ENCODE measurements at regions of chr11 and their contacts with region 1.

Region 1: GRCh38 chr11:120523196-120523595 is 11.6 kb downstream of the GRIK4 start:
- DNase-seq: no peak
- H3K4me3 ChIP-seq: no peak overlapping the region
- H3K27ac ChIP-seq: no peak overlapping the region
- H3K4me1 ChIP-seq: peaks cover 0 to 12% (median 2%) of the 10 kb centered on the region in 4 donors
- H3K27me3 ChIP-seq: peaks cover 93% of the 10 kb centered on the region
- CTCF ChIP-seq: no peak
- EP300 ChIP-seq: no peak
- POLR2A ChIP-seq: no peak

Region 2: GRCh38 chr11:120682866-120683265 is 159.7 kb after region 1 on chr11:
- in situ Hi-C with region 1: loop called in 3 of 4 experiments (anchors 5 to 25 kb)
- intact Hi-C with region 1: loop called (anchors 5 kb)
- DNase-seq: no peak
- H3K4me3 ChIP-seq: no peak overlapping the region
- H3K27ac ChIP-seq: no peak overlapping the region
- H3K4me1 ChIP-seq: no peaks in the 10 kb centered on the region
- H3K27me3 ChIP-seq: peaks cover 16% of the 10 kb centered on the region
- CTCF ChIP-seq: no peak
- EP300 ChIP-seq: no peak
- POLR2A ChIP-seq: no peak

Region 3: DNA sequence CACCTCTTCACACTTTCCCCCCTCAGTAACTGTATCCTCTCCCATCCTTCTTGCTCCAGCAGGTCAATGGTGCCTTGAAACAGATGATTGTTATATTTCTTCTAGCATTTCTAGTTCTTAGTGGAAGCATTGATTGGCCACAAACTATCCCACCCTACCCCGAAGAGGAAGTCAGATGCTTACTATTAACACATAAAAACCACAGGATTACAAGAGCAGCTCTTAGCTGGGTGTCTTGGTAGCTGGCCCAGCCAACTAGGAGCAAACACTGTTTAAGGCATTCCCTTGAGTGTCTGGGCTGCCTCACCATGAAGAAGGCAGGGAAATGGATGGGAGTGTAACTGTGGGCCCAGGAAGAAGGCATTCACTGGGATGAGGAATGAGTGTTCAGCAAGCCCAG is 165.0 kb after region 1 on chr11:
- in situ Hi-C with region 1: loop called in 3 of 4 experiments (anchors 5 to 25 kb)
- intact Hi-C with region 1: loop called (anchors 5 kb)
- DNase-seq: no peak
- H3K4me3 ChIP-seq: no peak overlapping the region
- H3K27ac ChIP-seq: no peak overlapping the region
- H3K4me1 ChIP-seq: no peaks in the 10 kb centered on the region
- H3K27me3 ChIP-seq: peaks cover 31% of the 10 kb centered on the region
- CTCF ChIP-seq: no peak
- EP300 ChIP-seq: no peak
- POLR2A ChIP-seq: no peak